Activated naive CD4-positive, alpha-beta T cell treated with anti-CD3 and anti-CD28 coated beads for 36 hours (primary cell): ENCODE measurements at regions of chr20 and their contacts with region 1.

Region 1: DNA sequence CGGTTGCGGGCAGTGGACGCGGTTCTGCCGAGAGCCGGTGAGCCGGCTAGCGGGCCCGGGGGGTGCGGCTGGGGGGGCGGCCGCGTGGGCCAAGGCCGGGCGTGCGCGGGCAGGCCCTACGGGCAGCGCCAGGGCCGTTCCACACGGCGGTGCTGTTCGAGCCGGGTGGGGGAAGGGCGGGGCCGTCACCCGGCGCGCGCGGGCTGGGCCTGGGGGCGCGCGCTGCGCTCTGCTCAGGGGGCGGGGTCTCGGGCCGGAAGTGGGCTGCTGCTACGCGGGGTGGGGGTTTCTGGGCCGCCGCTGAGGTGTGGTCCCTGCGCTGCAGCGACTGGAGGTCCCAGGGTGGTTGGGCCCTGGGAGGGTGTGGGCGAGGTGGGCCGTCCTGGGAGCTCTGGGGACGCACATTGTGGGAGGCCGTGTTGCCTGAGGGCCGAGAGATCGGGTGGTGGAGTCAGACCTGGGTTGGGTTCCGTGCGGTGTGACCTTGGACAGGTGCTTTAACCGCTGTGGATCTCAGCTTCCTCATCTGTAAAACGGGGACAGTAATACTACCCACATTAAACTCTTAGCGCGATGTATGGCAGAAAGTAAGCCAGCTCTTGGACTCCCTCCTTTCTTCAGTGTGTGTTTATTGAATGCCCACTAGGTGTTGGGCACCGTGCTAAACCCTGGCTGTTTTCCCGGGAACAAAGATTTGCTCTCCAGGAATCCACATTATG is 397 bp downstream of the MAPRE1 start:
- DNase-seq: peak; percentile 76
- H3K4me3 Mint-ChIP-seq: peak overlapping the region; percentile 97
- H3K27ac Mint-ChIP-seq: peak overlapping the region; percentile 94
- H3K4me1 Mint-ChIP-seq: peaks cover 35% of the 10 kb centered on the region
- H3K27me3 Mint-ChIP-seq: no peaks in the 10 kb centered on the region

Region 2: GRCh38 chr20:32743237-32744112 is 76.7 kb before region 1 on chr20 and contains the start of gene COMMD7:
- CTCF ChIA-PET with region 1: interaction called, 5 read pairs
- intact Hi-C with region 1: loop called (anchors 5 kb)
- DNase-seq: peak; percentile 93
- H3K4me3 Mint-ChIP-seq: peak within 1 kb of the TSS; percentile 94
- H3K27ac Mint-ChIP-seq: peak within 1 kb of the TSS; percentile 95
- H3K4me1 Mint-ChIP-seq: peaks cover 34% of the 10 kb centered on the region
- H3K27me3 Mint-ChIP-seq: no peaks in the 10 kb centered on the region
- total RNA-seq, gene COMMD7: 33.8 to 36.6 TPM

Region 3: GRCh38 chr20:32858701-32859372 is 38.7 kb after region 1 on chr20 and contains the start of gene EFCAB8:
- CTCF ChIA-PET with region 1: no interaction called
- intact Hi-C with region 1: no loop called
- DNase-seq: no peak
- H3K4me3 Mint-ChIP-seq: no peak within 1 kb of the TSS
- H3K27ac Mint-ChIP-seq: peak within 1 kb of the TSS; percentile 46
- H3K4me1 Mint-ChIP-seq: peaks cover 10% of the 10 kb centered on the region
- H3K27me3 Mint-ChIP-seq: no peaks in the 10 kb centered on the region
- total RNA-seq, gene EFCAB8: 0.45 to 0.57 TPM

Region 4: GRCh38 chr20:32930181-32930580 is 110.0 kb after region 1 on chr20:
- CTCF ChIA-PET with region 1: no interaction called
- intact Hi-C with region 1: no loop called
- DNase-seq: no peak
- H3K4me3 Mint-ChIP-seq: no peak overlapping the region
- H3K27ac Mint-ChIP-seq: no peak overlapping the region
- H3K4me1 Mint-ChIP-seq: peaks cover 2% of the 10 kb centered on the region
- H3K27me3 Mint-ChIP-seq: no peaks in the 10 kb centered on the region